AG04449 (cell line): ENCODE measurements at regions of chr6 and their contacts with region 1.

Region 1: DNA sequence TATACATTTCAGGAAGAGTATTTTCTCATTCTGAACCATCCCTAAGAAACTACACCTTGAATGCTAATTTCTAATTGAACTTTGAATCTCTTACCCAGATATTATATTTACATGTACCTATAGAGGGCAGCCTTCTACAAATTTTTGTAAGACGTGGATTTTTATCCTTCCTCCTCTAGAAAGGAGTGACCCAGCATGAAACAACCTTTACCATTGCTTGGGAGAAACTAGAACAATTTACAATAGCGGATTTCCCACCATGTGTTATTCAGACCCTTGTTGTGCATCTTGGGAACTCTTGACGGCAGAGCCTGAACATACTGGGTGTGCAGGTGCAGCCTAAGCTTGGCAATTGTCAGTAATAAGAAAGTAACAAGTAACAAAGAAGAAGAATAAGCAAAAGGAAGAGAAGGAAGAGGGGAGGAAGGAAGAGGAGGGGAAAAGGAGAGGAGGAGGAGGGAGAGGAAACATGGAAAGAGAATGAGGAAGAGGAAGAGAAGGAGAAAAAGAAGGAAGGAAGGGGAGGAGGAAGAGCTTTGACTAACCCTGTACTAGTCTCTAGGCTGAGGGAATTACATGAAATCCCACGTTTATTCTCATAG is 10.8 kb upstream of the TAAR1 start:
- DNase-seq: no peak
- H3K4me3 ChIP-seq: no peak overlapping the region
- CTCF ChIP-seq: no peak

Region 2: GRCh38 chr6:132651062-132651461 is 18.7 kb before region 1 on chr6:
- CTCF ChIA-PET with region 1: no interaction called
- POLR2A ChIA-PET with region 1: no interaction called
- DNase-seq: no peak
- H3K4me3 ChIP-seq: no peak overlapping the region
- CTCF ChIP-seq: no peak

Region 3: GRCh38 chr6:132780770-132781371 is 111.1 kb after region 1 on chr6:
- CTCF ChIA-PET with region 1: interaction called, 14 read pairs
- POLR2A ChIA-PET with region 1: no interaction called
- DNase-seq: peak; percentile 5
- H3K4me3 ChIP-seq: no peak overlapping the region
- CTCF ChIP-seq: peak; percentile 32

Region 4: DNA sequence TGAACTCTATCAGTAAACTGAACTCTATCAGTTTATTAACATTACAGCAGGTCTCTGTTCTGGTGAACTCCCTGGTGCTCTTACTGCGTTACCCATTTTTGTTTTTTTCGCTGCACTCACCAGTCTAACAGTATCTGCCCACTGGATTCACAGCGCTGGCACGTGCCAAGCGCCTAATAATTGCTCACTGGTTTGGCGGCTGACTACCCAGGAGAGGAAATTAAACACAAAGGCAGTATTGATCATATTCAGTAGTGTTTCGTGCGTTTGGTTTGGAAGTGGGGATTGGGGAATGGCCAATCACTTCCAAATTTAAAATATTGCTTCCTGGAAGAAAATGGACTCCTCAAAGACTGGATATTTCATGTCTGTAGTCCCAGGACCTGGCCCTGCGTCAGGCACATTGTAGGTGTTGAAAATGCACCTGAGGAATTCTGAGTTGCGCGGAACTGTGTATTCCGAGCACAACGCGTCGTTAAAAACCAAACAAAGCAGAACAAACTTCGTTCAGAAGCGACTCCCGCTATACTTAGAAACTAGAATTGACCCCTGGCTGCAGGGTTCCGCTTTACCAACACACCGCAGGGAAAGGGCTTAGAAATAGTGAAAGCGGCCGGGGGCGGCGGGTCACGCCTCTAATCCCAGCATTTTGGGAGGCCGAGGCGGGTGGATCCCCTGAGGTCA is 143.5 kb after region 1 on chr6:
- CTCF ChIA-PET with region 1: interaction called, 13 read pairs
- POLR2A ChIA-PET with region 1: interaction called, 3 read pairs
- DNase-seq: no peak
- H3K4me3 ChIP-seq: peak overlapping the region; percentile 85
- CTCF ChIP-seq: no peak

Region 5: DNA sequence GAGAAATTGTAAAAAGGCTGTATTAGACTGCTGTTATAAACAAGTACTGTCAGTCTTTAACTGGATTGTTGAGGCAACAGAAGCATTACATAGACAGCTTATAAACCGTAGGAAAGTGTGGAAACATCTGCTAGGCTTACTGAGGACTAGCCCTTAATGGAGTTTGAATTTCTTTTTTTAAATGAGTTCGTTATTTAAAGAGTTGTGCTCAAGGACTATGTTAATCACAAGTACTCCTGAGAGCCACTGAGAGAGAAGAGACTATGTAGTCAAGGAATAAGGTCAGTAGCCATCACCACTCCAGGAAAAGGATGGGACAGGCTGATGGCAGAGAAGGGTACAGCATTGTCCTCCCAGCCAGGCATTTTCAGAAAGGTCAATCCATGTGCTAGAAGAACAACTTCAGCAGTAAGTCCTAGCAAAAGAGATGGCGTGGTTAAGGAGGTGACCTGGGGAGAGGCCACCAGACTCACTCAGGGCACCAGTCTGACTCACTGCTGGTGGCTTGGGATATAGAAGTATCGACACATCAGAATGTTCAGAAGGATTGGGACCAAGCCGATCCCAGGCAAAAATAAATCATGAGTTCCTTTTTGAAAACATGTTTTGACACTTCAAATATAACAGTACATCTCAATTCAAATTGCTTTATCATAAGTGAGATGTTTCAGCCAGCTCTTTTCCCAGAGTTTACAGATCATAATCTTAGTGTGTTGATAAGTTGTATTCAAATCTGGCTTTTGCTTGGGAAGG is 151.0 kb after region 1 on chr6:
- CTCF ChIA-PET with region 1: interaction called, 12 read pairs
- POLR2A ChIA-PET with region 1: no interaction called
- DNase-seq: no peak
- H3K4me3 ChIP-seq: no peak overlapping the region
- CTCF ChIP-seq: no peak